ENCODE measurements at regions of chr12 and their contacts with region 1.

Region 1: GRCh38 chr12:51238510-51239334 is at the start of gene DAZAP2:
- DNase-seq: peak; percentile 98
- H3K4me3 ChIP-seq: peak within 1 kb of the TSS; percentile 75
- H3K4me3 Mint-ChIP-seq: peak within 1 kb of the TSS; percentile 86
- H3K27ac Mint-ChIP-seq: peak within 1 kb of the TSS; percentile 100
- H3K4me1 ChIP-seq: peaks cover 17% of the 10 kb centered on the region
- H3K4me1 Mint-ChIP-seq: peaks cover 5% of the 10 kb centered on the region
- H3K27me3 ChIP-seq: no peaks in the 10 kb centered on the region
- H3K27me3 Mint-ChIP-seq: no peaks in the 10 kb centered on the region
- CTCF ChIP-seq: peak; percentile 16 to 59
- total RNA-seq, gene DAZAP2: 84.9 and 100 TPM in 2 replicates

Region 2: DNA sequence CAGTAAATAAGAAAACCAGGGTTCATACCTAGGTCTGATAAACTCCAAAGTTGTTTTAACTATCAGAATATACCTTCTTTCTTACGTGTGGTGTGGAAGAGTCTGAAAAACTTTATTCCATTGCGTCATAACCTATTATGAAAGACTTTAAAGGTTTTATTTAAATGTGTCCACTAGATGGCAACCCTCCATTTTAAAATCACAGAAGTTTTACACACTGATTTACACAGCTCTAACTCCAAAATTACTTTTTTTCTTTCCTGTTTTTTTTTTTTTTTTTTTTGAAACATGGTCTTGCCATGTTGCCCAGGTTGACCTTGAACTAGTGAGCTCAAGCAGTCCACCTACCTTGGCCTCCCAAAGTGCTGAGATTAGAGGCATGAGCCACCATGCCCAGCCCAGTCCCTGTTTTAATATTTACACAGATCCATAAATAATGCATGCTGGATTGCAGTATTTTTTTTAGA is 413.3 kb before region 1 on chr12:
- CTCF ChIA-PET with region 1: interaction called, 3 read pairs
- POLR2A ChIA-PET with region 1: no interaction called
- intact Hi-C with region 1: loop called (anchors 10 kb)
- DNase-seq: peak in 1 of 2 experiments; percentile 51
- H3K4me3 ChIP-seq: no peak overlapping the region
- H3K4me3 Mint-ChIP-seq: peak overlapping the region; percentile 10
- H3K27ac Mint-ChIP-seq: peak overlapping the region; percentile 9
- H3K4me1 ChIP-seq: no peaks in the 10 kb centered on the region
- H3K4me1 Mint-ChIP-seq: no peaks in the 10 kb centered on the region
- H3K27me3 ChIP-seq: no peaks in the 10 kb centered on the region
- H3K27me3 Mint-ChIP-seq: no peaks in the 10 kb centered on the region
- CTCF ChIP-seq: peak; percentile 46 to 57

Region 3: DNA sequence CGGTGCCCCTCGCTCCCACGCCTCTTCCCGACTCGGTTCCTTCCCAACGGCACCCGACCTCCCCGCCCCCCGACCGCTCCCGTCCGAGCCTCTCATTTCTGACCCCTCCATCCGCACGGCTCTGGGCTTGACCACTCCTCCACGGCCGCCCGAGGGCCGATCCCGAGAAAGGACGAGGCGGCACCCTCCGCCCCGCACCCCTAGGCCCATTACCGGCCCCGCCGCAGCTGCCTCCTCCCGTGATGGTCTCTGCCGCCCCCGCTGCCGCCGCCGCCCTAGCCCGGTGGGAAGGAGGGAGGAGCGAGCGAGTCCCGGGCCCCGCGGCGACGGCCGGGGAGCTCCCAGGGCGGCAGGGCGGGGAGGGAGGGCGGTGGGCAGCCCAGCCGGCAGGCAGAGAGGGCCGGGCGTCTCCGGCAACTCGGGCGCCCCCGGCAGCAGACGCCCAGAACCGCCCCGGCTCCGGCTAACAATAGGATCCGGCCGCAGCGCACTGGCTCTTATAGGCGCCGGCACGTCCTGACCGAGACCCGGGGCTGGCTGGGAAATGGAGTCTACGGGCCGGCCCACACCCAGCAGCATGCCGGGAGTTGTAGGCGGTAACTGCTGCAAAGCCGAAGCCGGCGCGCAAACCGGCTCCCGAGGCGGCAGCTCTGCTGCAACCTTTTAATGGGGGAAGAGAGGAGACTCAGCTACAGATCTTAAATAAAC is 155.4 kb before region 1 on chr12 and contains the start of gene CSRNP2:
- CTCF ChIA-PET with region 1: no interaction called
- POLR2A ChIA-PET with region 1: interaction called, 27 read pairs
- intact Hi-C with region 1: loop called (anchors 1 kb)
- DNase-seq: peak; percentile 98 to 99
- H3K4me3 ChIP-seq: peak within 1 kb of the TSS; percentile 85
- H3K4me3 Mint-ChIP-seq: peak within 1 kb of the TSS; percentile 96
- H3K27ac Mint-ChIP-seq: peak within 1 kb of the TSS; percentile 94
- H3K4me1 ChIP-seq: peaks cover 10% of the 10 kb centered on the region; the same call in 1 of the 2 replicates
- H3K4me1 Mint-ChIP-seq: peaks cover 16% of the 10 kb centered on the region
- H3K27me3 ChIP-seq: no peaks in the 10 kb centered on the region
- H3K27me3 Mint-ChIP-seq: no peaks in the 10 kb centered on the region
- CTCF ChIP-seq: peak in 1 of 2 experiments; percentile 2
- total RNA-seq, gene CSRNP2: 39.7 and 44.0 TPM in 2 replicates

Region 4: DNA sequence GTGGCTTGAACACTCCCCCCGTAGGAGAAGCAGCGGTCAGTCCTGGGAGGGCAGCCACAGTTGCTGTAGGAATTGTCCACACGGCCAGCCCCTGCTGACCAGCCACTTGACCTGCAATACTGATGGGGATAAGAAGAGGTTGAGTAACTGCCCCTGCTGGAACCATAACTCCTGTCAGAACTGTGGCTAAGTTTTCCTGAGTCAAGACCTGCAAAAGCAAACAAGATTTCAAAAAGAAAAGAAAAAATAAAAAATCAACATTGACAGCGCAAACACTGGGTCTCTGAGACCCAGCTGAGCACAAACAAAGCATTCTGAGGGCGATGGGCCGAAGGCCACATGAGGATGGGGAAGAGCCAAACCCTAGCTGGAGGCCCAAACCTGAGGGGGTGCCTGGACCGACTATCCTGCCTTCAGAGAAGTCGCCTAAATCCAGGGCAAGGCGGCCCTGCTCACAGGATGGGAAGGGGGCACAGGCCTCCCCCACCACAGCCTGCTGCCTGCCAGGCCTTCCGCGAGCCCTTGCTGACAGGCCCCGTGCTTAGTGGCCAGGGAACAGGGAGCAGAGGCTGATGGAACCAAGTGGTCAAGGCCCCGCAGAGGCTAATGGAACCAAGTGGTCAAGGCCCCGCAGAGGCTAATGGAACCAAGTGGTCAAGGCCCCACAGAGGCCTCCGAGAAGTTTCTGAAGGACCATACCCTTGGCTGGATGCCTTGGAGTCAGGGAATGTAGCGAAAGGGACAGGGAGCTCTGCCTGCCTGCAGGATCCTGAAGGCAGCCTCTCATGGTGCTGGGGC is 40.0 kb before region 1 on chr12:
- CTCF ChIA-PET with region 1: interaction called, 12 read pairs
- POLR2A ChIA-PET with region 1: no interaction called
- intact Hi-C with region 1: no loop called
- DNase-seq: peak; percentile 50 to 52
- H3K4me3 ChIP-seq: no peak overlapping the region
- H3K4me3 Mint-ChIP-seq: no peak overlapping the region
- H3K27ac Mint-ChIP-seq: peak overlapping the region; percentile 43
- H3K4me1 ChIP-seq: peaks cover 11% of the 10 kb centered on the region; the same call in 1 of the 2 replicates
- H3K4me1 Mint-ChIP-seq: peaks cover 21% of the 10 kb centered on the region
- H3K27me3 ChIP-seq: no peaks in the 10 kb centered on the region
- H3K27me3 Mint-ChIP-seq: no peaks in the 10 kb centered on the region
- CTCF ChIP-seq: peak in 1 of 2 experiments; percentile 13

Region 5: DNA sequence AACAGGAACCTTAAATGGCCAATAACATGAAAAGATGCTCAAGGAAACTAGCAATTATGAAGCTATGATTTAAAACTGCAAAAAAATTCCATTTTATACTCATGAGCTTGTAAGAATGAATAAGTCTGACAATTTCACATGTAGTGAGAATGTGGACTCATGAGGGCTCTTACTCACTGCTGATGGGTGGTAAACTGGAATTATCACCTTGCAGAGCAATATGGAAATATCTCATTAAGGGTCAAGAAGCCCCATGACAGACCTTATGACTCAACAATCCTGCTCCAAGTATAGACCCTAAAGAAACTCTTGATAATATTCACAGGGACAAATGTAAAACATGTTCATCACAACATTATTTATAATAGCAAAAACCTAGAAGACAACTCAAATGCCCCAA is 55.0 kb after region 1 on chr12:
- CTCF ChIA-PET with region 1: no interaction called
- POLR2A ChIA-PET with region 1: no interaction called
- intact Hi-C with region 1: no loop called
- DNase-seq: no peak
- H3K4me3 ChIP-seq: no peak overlapping the region
- H3K4me3 Mint-ChIP-seq: no peak overlapping the region
- H3K27ac Mint-ChIP-seq: no peak overlapping the region
- H3K4me1 ChIP-seq: peaks cover 4% of the 10 kb centered on the region; the same call in 1 of the 2 replicates
- H3K4me1 Mint-ChIP-seq: peaks cover 6% of the 10 kb centered on the region
- H3K27me3 ChIP-seq: no peaks in the 10 kb centered on the region
- H3K27me3 Mint-ChIP-seq: no peaks in the 10 kb centered on the region
- CTCF ChIP-seq: no peak

Region 6: DNA sequence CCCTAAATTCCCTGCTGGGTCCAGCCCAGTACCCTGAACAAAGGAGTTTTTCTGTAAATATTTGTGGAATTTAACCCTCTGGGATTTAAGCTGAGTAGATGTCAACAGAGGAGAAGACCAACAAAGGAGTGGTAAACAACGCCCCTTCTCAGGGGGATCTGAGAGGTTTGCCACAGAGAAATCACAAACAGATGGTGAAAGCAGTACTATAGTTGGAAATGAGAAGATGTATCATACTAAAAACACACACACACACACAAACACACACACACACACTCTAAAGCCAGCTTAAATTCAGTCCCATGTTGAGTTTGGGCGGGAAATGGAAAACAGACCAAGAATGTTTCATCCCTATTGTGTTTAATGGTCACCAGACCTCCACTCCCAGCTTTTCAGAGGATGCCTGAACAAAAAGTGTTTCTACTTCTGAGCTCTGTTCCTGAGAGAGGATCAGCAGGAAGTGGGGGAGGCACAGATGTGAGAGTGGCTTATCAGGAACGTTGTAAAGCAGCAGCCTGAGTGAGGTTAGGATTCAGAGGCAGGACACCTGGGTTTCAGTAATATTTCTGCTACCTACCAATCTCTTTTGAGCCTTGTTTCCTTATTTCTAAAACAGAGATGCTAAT is 82.1 kb after region 1 on chr12:
- CTCF ChIA-PET with region 1: no interaction called
- POLR2A ChIA-PET with region 1: interaction called, 10 read pairs
- intact Hi-C with region 1: no loop called
- DNase-seq: peak; percentile 53 to 60
- H3K4me3 ChIP-seq: no peak overlapping the region
- H3K4me3 Mint-ChIP-seq: peak overlapping the region; percentile 34
- H3K27ac Mint-ChIP-seq: peak overlapping the region; percentile 81
- H3K4me1 ChIP-seq: peaks cover 59% of the 10 kb centered on the region
- H3K4me1 Mint-ChIP-seq: peaks cover 62% of the 10 kb centered on the region
- H3K27me3 ChIP-seq: no peaks in the 10 kb centered on the region
- H3K27me3 Mint-ChIP-seq: no peaks in the 10 kb centered on the region
- CTCF ChIP-seq: no peak

Region 7: GRCh38 chr12:51351913-51352532 is 113.3 kb after region 1 on chr12:
- CTCF ChIA-PET with region 1: no interaction called
- POLR2A ChIA-PET with region 1: no interaction called
- intact Hi-C with region 1: no loop called
- DNase-seq: peak; percentile 52 to 65
- H3K4me3 ChIP-seq: no peak overlapping the region
- H3K4me3 Mint-ChIP-seq: no peak overlapping the region
- H3K27ac Mint-ChIP-seq: no peak overlapping the region
- H3K4me1 ChIP-seq: 0 out of 2 replicates have a peak, but pooled peaks cover 10% of the 10 kb centered on the region
- H3K4me1 Mint-ChIP-seq: peaks cover 11% of the 10 kb centered on the region
- H3K27me3 ChIP-seq: no peaks in the 10 kb centered on the region
- H3K27me3 Mint-ChIP-seq: no peaks in the 10 kb centered on the region
- CTCF ChIP-seq: peak; percentile 64 to 65

Region 8: DNA sequence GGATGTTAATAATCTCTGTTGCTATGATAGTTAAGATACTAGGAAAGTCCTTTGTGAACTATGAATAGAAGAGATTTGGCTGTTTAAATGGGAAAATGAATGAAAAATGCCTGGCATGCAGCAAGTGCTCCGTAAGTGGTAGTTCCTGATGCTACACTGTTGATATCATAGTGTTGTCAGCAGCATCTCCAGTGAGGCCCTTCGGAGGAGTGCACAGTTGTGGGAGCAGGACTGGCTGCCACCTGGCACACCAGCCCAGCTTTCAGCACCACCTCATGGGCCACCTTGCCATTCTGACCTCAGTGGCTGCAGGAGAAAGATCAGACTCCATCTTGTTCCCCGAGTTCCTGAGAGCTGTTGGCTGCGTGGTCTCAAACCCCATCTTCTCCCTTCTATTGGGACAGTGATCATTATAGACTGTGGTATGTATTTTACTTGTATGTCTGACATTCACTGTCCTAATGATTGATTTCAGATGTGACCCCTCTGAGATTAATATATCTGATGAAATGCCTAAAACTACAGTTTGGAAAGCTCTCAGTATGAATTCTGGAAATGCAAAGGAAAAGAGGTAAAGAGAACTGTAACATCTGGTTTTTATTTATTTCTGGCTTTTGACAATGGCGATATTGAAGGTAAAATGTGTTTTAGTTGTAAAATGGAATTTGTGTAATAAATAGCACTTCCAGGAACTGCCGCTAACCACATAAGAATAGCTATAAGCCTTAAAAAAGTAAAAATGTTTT is 266.8 kb after region 1 on chr12:
- CTCF ChIA-PET with region 1: no interaction called
- POLR2A ChIA-PET with region 1: no interaction called
- intact Hi-C with region 1: no loop called
- DNase-seq: no peak
- H3K4me3 ChIP-seq: no peak overlapping the region
- H3K4me3 Mint-ChIP-seq: no peak overlapping the region
- H3K27ac Mint-ChIP-seq: no peak overlapping the region
- H3K4me1 ChIP-seq: no peaks in the 10 kb centered on the region
- H3K4me1 Mint-ChIP-seq: no peaks in the 10 kb centered on the region
- H3K27me3 ChIP-seq: no peaks in the 10 kb centered on the region
- H3K27me3 Mint-ChIP-seq: no peaks in the 10 kb centered on the region
- CTCF ChIP-seq: no peak